GM18951 (cell line): ENCODE measurements at regions of chr19 and their contacts with region 1.

Region 1: DNA sequence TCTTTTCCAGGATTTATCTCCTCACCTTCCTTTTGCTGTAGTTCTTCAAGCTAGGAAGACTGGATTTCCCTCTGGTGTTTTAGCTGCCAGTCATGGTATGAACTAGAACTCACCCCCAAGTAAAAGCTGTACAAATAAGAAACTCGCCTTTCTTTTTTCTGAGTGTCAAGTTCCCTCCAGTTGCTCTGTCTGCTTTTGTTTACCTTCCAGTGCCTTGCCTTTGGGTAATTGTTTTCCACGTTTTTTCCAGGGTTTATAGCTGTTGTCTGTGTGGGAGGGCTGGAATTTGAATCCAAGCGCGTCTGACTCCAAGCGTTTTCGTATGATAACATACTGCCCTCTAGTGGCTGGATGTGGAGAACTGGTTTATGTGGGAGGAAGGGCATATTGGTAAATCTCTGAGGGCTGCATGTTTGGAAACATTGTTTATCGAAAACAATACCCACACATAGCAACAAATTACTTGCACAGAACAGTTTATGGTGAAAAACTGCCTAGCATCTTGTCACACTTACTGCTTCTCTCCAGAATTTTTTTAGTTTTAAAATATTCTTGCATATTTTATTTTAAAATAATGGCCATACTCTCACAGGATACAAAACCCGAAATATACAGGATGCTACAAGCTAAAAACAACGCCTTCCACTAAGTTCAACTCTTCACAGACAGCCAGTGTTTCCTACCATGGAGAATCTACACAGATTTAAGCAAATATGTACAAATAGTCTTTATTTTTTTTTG is 19.2 kb downstream of the RCN3 start:
- POLR2A ChIP-seq: no peak

Region 2: GRCh38 chr19:49224856-49225255 is 322.1 kb before region 1 on chr19:
- in situ Hi-C with region 1: loop called (anchors 10 kb)
- POLR2A ChIP-seq: no peak